ENCODE measurements at regions of chr6 and their contacts with region 1.

Region 1: GRCh38 chr6:121849477-121849876 is 414.0 kb downstream of the GJA1 start:
- DNase-seq: peak in 4 of 5 donors; percentile 27 to 66 (median 60)
- ATAC-seq: peak; percentile 79 to 94 (median 91)
- H3K4me3 ChIP-seq: no peak overlapping the region
- H3K27ac ChIP-seq: peak overlapping the region in 4 of 12 donors; percentile 18 to 24 (median 18)
- H3K4me1 ChIP-seq: peaks cover 0 to 26% (median 7%) of the 10 kb centered on the region in 12 donors
- H3K27me3 ChIP-seq: no peaks in the 10 kb centered on the region
- CTCF ChIP-seq: peak; percentile 58 to 86 (median 80)
- POLR2A ChIP-seq: no peak

Region 2: DNA sequence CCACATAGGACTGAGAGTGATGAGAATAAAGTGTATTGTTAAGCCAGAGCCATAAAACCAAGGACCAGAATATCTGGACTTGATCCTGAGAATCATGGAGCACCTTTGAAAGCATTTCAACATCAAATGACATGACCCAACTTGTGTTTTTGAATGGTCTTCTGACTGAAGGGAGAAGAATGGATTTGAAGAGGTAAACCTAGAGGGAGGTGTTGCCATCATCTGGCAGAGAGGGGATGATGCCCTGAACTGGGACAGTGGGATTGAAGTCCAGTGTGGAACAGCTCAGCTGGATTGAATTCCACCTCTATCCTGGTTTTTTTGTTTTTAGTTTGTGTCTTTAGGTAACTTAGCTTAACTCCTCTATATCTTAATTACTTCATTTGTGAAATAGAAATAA is 1085.2 kb before region 1 on chr6:
- intact Hi-C with region 1: no loop called
- DNase-seq: no peak
- ATAC-seq: no peak
- H3K4me3 ChIP-seq: no peak overlapping the region
- H3K27ac ChIP-seq: no peak overlapping the region
- H3K4me1 ChIP-seq: no peaks in the 10 kb centered on the region
- H3K27me3 ChIP-seq: no peaks in the 10 kb centered on the region
- CTCF ChIP-seq: no peak
- POLR2A ChIP-seq: no peak

Region 3: GRCh38 chr6:121430514-121431460 is 418.7 kb before region 1 on chr6:
- intact Hi-C with region 1: loop called in 6 of 10 experiments (anchors 1 to 5 kb)
- DNase-seq: no peak
- ATAC-seq: peak in 1 of 4 donors; percentile 37
- H3K4me3 ChIP-seq: peak overlapping the region in 1 of 12 donors; percentile 4
- H3K27ac ChIP-seq: peak overlapping the region in 3 of 12 donors; percentile 23 to 44 (median 24)
- H3K4me1 ChIP-seq: peaks cover 0 to 13% (median 1%) of the 10 kb centered on the region in 12 donors
- H3K27me3 ChIP-seq: no peaks in the 10 kb centered on the region
- CTCF ChIP-seq: peak; percentile 48 to 85 (median 78)
- POLR2A ChIP-seq: no peak

Region 4: DNA sequence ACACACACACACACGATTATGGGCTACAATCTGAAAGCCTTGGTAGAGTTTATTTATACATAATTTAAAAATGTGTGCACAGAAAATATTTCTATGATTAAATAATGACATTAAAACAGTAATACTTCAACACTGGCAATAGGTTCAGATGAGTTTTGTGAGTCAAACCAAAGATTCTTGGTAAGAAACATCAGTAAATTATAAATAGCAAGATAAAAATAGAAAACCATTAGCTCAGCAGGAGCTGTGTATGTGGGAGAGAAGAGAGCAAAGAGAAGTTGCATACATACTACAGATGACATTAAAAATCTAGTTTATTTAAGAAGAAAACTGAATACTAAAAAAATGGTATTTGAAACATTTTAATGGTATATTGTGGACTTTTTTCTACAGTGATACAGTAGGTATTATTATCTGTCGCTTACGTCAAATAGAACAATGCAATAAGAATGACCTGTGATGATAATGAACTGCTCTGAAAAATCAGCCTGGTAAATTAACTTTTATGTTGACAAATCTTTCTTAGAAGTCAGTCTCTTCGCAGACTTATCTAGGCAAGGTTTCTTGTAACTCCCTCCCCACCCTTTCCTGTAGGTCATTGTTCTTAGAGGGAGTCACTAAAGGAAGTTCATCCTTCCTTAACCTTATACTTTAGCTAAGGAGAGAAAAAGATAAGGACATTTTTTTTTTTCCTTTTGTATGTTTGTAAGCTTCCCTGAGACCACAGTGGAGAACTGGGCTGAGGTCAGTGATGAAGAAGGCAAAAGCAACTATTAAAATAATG is 264.7 kb before region 1 on chr6:
- intact Hi-C with region 1: loop called in 2 of 10 experiments (anchors 5 kb)
- DNase-seq: no peak
- ATAC-seq: peak; percentile 58 to 79 (median 71)
- H3K4me3 ChIP-seq: no peak overlapping the region
- H3K27ac ChIP-seq: peak overlapping the region in 10 of 12 donors; percentile 37 to 64 (median 54)
- H3K4me1 ChIP-seq: peaks cover 0 to 23% (median 8%) of the 10 kb centered on the region in 12 donors
- H3K27me3 ChIP-seq: no peaks in the 10 kb centered on the region
- CTCF ChIP-seq: no peak
- POLR2A ChIP-seq: no peak

Region 5: GRCh38 chr6:121666814-121667213 is 182.7 kb before region 1 on chr6:
- intact Hi-C with region 1: loop called in 2 of 10 experiments (anchors 5 to 10 kb)
- DNase-seq: no peak
- ATAC-seq: peak; percentile 93 to 96 (median 95)
- H3K4me3 ChIP-seq: no peak overlapping the region
- H3K27ac ChIP-seq: peak overlapping the region in 11 of 12 donors; percentile 18 to 74 (median 47)
- H3K4me1 ChIP-seq: peaks cover 0 to 17% (median 12%) of the 10 kb centered on the region in 12 donors
- H3K27me3 ChIP-seq: no peaks in the 10 kb centered on the region
- CTCF ChIP-seq: no peak
- POLR2A ChIP-seq: no peak

Region 6: GRCh38 chr6:122008101-122008999 is 158.9 kb after region 1 on chr6:
- intact Hi-C with region 1: loop called in 1 of 10 experiments (anchors 10 kb)
- DNase-seq: peak in 4 of 5 donors; percentile 59 to 68 (median 68)
- ATAC-seq: peak; percentile 96 to 99 (median 98)
- H3K4me3 ChIP-seq: no peak overlapping the region
- H3K27ac ChIP-seq: peak overlapping the region; percentile 52 to 88 (median 66)
- H3K4me1 ChIP-seq: peaks cover 0 to 19% (median 10%) of the 10 kb centered on the region in 12 donors
- H3K27me3 ChIP-seq: no peaks in the 10 kb centered on the region
- CTCF ChIP-seq: no peak
- POLR2A ChIP-seq: no peak

Region 7: DNA sequence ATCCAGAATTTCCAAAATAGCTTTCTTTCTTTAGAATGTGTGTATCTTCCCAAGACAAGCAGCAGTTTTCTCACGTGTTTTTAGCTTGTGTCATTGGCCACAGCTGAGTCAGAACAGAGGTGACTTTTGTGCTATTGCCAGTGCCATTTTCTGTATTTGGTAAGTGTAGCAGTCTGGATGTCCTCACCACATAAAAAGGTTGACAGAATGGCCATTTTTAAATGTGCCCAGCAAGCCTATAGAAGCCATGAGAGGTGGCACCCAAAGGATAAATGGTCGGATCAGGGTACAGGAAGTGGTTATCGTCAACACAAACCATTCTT is 280.5 kb after region 1 on chr6:
- intact Hi-C with region 1: loop called in 1 of 10 experiments (anchors 5 kb)
- DNase-seq: peak in 4 of 5 donors; percentile 31 to 39 (median 38)
- ATAC-seq: peak; percentile 75 to 87 (median 82)
- H3K4me3 ChIP-seq: no peak overlapping the region
- H3K27ac ChIP-seq: peak overlapping the region; percentile 57 to 91 (median 80)
- H3K4me1 ChIP-seq: peaks cover 0 to 23% (median 0%) of the 10 kb centered on the region in 12 donors
- H3K27me3 ChIP-seq: no peaks in the 10 kb centered on the region
- CTCF ChIP-seq: no peak
- POLR2A ChIP-seq: no peak

Region 8: DNA sequence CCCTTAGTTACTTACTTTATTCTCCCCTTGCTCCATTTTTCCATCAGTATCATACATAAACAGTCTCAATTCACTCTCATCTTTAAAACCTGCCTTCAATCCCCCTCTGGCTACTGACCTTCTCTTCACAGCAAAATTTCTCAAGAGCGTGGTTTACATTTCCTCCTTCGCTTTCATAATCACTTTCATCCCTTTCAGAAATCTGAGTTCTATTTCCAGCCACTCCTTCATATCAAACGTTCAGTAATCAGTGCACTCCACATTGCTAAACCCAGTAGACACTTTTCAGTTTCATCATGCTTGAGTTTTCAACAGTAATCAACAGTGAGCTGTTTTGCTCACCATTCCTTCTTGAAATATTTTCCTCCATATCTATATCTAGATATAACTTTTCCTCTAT is 373.3 kb after region 1 on chr6:
- intact Hi-C with region 1: no loop called
- DNase-seq: no peak
- ATAC-seq: no peak
- H3K4me3 ChIP-seq: no peak overlapping the region
- H3K27ac ChIP-seq: no peak overlapping the region
- H3K4me1 ChIP-seq: no peaks in the 10 kb centered on the region
- H3K27me3 ChIP-seq: no peaks in the 10 kb centered on the region
- CTCF ChIP-seq: no peak
- POLR2A ChIP-seq: no peak

Region 9: DNA sequence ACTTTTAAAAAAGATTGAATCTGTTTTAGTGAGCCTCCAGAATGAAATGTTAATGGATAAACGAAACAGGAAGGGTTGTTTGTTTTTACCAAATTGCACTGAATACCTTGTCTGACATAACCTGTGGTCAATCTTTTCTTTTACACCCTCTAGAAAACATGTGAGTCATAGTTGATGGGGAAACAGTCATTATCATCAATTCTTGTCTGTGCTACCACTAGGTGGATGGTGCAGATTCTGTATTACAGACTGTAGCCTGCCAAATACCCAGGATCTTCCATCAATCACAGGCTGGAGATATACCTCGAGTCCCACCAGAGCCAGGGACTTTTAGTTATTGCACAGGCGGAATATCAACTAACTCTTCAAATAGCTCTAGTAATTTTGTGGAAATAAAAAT is 731.3 kb after region 1 on chr6:
- intact Hi-C with region 1: no loop called
- DNase-seq: no peak
- ATAC-seq: no peak
- H3K4me3 ChIP-seq: no peak overlapping the region
- H3K27ac ChIP-seq: no peak overlapping the region
- H3K4me1 ChIP-seq: no peaks in the 10 kb centered on the region
- H3K27me3 ChIP-seq: no peaks in the 10 kb centered on the region
- CTCF ChIP-seq: no peak
- POLR2A ChIP-seq: no peak